ENCODE measurements at regions of chr15 and their contacts with region 1.

Region 1: GRCh38 chr15:64067564-64068030 is 21.3 kb upstream of the DAPK2 start:
- DNase-seq: peak; percentile 70
- CTCF ChIP-seq: peak; percentile 74

Region 2: GRCh38 chr15:63466378-63467192 is 601.0 kb before region 1 on chr15:
- in situ Hi-C with region 1: loop called (anchors 25 kb)
- DNase-seq: peak; percentile 84
- CTCF ChIP-seq: peak; percentile 77

Region 3: GRCh38 chr15:63600616-63601025 is 467.0 kb before region 1 on chr15:
- in situ Hi-C with region 1: loop called (anchors 25 kb)
- DNase-seq: peak; percentile 95
- CTCF ChIP-seq: peak; percentile 31

Region 4: GRCh38 chr15:63752075-63752684 is 315.4 kb before region 1 on chr15:
- in situ Hi-C with region 1: loop called (anchors 25 kb)
- DNase-seq: peak; percentile 34
- CTCF ChIP-seq: peak; percentile 72

Region 5: DNA sequence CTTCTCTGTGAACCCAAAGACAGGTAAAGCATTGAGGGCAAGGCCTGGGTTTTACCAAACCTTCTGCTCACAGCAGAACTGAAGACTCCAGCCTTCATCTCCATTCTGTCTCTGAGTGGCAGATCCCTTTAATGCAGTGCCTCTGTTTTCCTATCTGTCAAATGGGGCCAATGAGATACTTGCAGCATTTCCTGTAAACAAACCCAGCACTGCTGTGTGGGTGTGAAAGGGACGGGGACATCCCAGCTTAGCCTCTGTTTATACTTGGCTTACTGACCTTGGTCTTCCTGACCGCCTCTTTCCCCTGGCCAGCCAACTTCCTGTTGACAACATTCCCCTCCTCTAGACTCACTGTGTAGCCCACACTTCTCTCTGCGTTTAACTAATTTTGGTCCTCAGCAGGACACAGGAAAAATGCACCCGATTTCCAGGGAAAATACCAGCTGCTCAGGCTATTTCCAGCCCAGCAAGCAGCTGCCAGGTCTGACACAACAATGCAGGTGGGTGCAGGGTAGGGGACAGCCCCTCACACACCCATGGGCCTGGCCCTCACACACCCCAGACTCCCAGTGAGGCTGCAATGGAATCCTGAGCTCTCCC is 128.0 kb before region 1 on chr15:
- in situ Hi-C with region 1: no loop called
- DNase-seq: no peak
- CTCF ChIP-seq: no peak

Region 6: DNA sequence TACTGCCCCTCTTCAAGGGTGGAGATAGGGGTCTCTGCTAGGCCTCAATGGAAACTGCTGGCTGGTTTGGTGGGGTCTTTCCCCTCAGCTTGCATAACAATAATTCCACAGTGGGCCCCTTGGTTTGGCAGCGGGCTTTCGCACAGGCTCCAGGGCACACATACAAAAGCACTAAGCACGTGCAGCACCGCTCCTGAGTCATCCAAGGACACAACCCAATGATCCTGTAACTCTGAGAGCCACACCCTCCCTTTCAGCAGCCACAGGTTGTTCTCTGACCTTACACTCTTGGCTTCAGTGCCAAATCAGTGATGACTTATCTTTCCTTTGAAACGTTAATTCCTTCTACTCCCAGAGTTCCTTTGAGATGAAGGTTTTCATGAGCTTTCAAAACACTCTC is 63.0 kb before region 1 on chr15:
- in situ Hi-C with region 1: no loop called
- DNase-seq: no peak
- CTCF ChIP-seq: no peak

Measured in GM13977 (cell line).